ENCODE measurements at regions of chr16 and their contacts with region 1.

Region 1: GRCh38 chr16:29765167-29766032 is 12.7 kb upstream of the ZG16 start:
- DNase-seq: no peak
- H3K4me3 ChIP-seq: no peak overlapping the region
- H3K4me3 Mint-ChIP-seq: no peak overlapping the region
- H3K27ac ChIP-seq: no peak overlapping the region
- H3K27ac Mint-ChIP-seq: peak overlapping the region in 1 of 7 donors; percentile 86
- H3K4me1 ChIP-seq: peaks cover 5 to 7% of the 10 kb centered on the region in 2 donors
- H3K4me1 Mint-ChIP-seq: peaks cover 10% of the 10 kb centered on the region
- H3K27me3 ChIP-seq: no peaks in the 10 kb centered on the region
- H3K27me3 Mint-ChIP-seq: peaks cover 0 to 9% (median 0%) of the 10 kb centered on the region in 3 donors
- CTCF ChIP-seq: no peak

Region 2: GRCh38 chr16:29710227-29711219 is 54.9 kb before region 1 on chr16:
- intact Hi-C with region 1: loop called in 1 of 2 experiments (anchors 10 kb)
- DNase-seq: peak; percentile 54 to 79 (median 78)
- H3K4me3 ChIP-seq: peak overlapping the region in 1 of 3 experiments; percentile 9
- H3K4me3 Mint-ChIP-seq: peak overlapping the region in 1 of 2 donors; percentile 63
- H3K27ac ChIP-seq: peak overlapping the region; percentile 41 to 57
- H3K27ac Mint-ChIP-seq: peak overlapping the region in 6 of 7 donors; percentile 79 to 92 (median 90)
- H3K4me1 ChIP-seq: peaks cover 22 to 30% of the 10 kb centered on the region in 2 donors
- H3K4me1 Mint-ChIP-seq: peaks cover 26% of the 10 kb centered on the region
- H3K27me3 ChIP-seq: no peaks in the 10 kb centered on the region
- H3K27me3 Mint-ChIP-seq: peaks cover 3 to 7% (median 6%) of the 10 kb centered on the region in 3 donors
- CTCF ChIP-seq: peak; percentile 81

Region 3: GRCh38 chr16:29983420-29984136 is 218.2 kb after region 1 on chr16:
- intact Hi-C with region 1: no loop called
- DNase-seq: no peak
- H3K4me3 ChIP-seq: no peak overlapping the region
- H3K4me3 Mint-ChIP-seq: no peak overlapping the region
- H3K27ac ChIP-seq: no peak overlapping the region
- H3K27ac Mint-ChIP-seq: peak overlapping the region in 1 of 7 donors; percentile 45
- H3K4me1 ChIP-seq: no peaks in the 10 kb centered on the region
- H3K4me1 Mint-ChIP-seq: no peaks in the 10 kb centered on the region
- H3K27me3 ChIP-seq: no peaks in the 10 kb centered on the region
- H3K27me3 Mint-ChIP-seq: peaks cover 0 to 2% (median 0%) of the 10 kb centered on the region in 3 donors
- CTCF ChIP-seq: no peak